Posterior vena cava (tissue), 2 donors: ENCODE measurements at regions of chr5 and their contacts with region 1.

Region 1: GRCh38 chr5:122680631-122681350 is 94.1 kb upstream of the SNX2 start:
- DNase-seq: no peak

Region 2: GRCh38 chr5:120991569-120991968 is 1689.2 kb before region 1 on chr5:
- intact Hi-C with region 1: loop called in 1 of 2 experiments (anchors 10 kb)
- DNase-seq: no peak

Region 3: GRCh38 chr5:122704243-122705036 is 23.6 kb after region 1 on chr5:
- intact Hi-C with region 1: no loop called
- DNase-seq: no peak